ENCODE measurements at regions of chr6 and their contacts with region 1.

Region 1: GRCh38 chr6:135183532-135184440 is 2.7 kb downstream of the MYB start:
- DNase-seq: peak; percentile 92
- H3K4me3 Mint-ChIP-seq: peak overlapping the region; percentile 89
- H3K27ac Mint-ChIP-seq: peak overlapping the region; percentile 89
- H3K4me1 Mint-ChIP-seq: peaks cover 15% of the 10 kb centered on the region
- H3K27me3 Mint-ChIP-seq: no peaks in the 10 kb centered on the region

Region 2: DNA sequence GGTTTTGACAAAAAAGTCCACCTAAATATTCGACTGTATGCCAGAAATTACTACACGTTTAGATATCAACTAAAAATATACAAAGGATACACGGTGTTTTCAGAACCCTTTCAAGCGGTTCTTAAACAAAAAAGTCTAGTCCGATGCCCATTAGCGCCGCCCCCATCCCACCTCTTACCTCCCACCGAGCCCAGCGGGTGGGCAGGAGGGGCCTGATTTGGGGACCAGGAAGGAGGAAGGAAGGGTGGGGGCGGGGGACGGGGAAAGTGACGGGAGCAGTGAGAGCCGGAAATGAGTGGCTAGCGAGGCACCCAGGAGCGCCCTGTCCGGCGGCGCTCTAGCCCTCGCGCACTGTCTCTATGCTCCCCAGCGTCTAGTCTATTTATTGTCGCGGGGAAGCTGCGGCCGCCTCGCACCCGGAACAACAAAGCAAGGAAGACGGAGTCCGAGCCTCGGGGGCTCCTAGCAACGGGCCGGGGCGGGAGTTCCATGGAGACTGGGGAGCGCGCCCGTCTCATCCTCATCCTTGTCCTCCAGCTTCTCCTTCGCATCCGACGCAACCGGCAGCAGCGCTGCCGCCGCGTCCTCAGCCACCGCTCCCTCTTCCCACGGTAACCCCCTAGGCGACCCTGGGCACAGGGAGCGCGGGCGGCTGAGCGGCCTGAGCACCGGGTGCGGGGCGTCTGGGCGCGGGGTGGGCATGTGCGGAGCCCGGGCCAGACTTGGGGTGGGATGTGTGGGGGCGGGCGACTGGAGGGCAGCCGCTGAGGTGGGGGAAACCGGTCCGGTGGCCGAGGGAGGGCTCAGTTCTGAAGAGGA is 1230.8 kb before region 1 on chr6 and contains the start of gene TBPL1:
- CTCF ChIA-PET with region 1: no interaction called
- intact Hi-C with region 1: loop called (anchors 10 kb)
- DNase-seq: peak; percentile 92
- H3K4me3 Mint-ChIP-seq: peak within 1 kb of the TSS; percentile 87
- H3K27ac Mint-ChIP-seq: peak within 1 kb of the TSS; percentile 86
- H3K4me1 Mint-ChIP-seq: peaks cover 36% of the 10 kb centered on the region
- H3K27me3 Mint-ChIP-seq: no peaks in the 10 kb centered on the region
- total RNA-seq, gene TBPL1: 27.0 to 27.6 TPM

Region 3: DNA sequence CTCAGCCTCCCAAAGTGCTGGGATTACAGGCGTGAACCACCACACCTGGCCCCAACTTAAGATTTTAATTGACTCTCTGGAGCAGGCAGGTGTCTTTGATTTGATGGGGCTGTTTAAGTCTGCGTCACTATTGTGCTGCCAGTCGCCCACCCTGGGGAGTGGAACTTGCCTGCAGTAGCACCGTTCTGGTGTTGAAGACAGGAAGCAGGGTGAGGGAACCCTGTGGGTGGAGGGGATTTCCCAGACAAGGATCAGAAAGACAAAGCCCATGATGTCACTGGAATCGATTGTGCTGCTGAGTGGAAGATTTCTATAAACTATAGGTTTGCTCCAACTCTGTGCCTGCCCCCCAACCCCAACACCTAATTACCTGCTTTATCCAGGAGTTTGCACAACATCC is 244.9 kb before region 1 on chr6:
- CTCF ChIA-PET with region 1: interaction called, 7 read pairs
- intact Hi-C with region 1: loop called (anchors 5 kb)
- DNase-seq: peak; percentile 85
- H3K4me3 Mint-ChIP-seq: no peak overlapping the region
- H3K27ac Mint-ChIP-seq: no peak overlapping the region
- H3K4me1 Mint-ChIP-seq: peaks cover 21% of the 10 kb centered on the region
- H3K27me3 Mint-ChIP-seq: no peaks in the 10 kb centered on the region

Region 4: GRCh38 chr6:135088818-135089809 is 94.7 kb before region 1 on chr6:
- CTCF ChIA-PET with region 1: interaction called, 15 read pairs
- intact Hi-C with region 1: loop called (anchors 1 kb)
- DNase-seq: peak; percentile 61
- H3K4me3 Mint-ChIP-seq: peak overlapping the region; percentile 23
- H3K27ac Mint-ChIP-seq: peak overlapping the region; percentile 78
- H3K4me1 Mint-ChIP-seq: peaks cover 86% of the 10 kb centered on the region
- H3K27me3 Mint-ChIP-seq: no peaks in the 10 kb centered on the region

Region 5: GRCh38 chr6:135162678-135163439 is 20.9 kb before region 1 on chr6:
- CTCF ChIA-PET with region 1: interaction called, 8 read pairs
- intact Hi-C with region 1: loop called (anchors 1 kb)
- DNase-seq: peak; percentile 56
- H3K4me3 Mint-ChIP-seq: no peak overlapping the region
- H3K27ac Mint-ChIP-seq: peak overlapping the region; percentile 77
- H3K4me1 Mint-ChIP-seq: peaks cover 58% of the 10 kb centered on the region
- H3K27me3 Mint-ChIP-seq: no peaks in the 10 kb centered on the region

Region 6: DNA sequence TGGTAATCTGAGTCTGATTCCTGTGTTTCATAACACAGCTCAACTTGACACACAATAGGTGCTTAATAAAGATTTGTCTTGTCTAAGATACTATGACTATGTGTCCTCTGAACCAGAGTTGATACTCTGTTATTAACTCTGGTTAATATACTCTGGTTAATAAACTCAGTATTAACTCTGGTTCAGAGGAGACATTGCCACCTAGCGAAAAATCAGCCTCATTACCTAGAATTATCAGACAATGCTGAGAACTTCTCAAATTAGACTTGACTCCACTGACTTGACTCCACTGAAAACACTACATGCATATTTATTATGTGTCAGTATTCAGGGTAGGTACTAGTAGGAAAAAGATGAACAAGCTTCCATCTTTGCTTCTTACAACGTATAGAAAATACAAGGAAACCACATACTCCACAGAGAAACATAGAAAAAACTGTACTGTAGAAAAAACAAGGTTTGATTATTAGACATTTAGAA is 239.9 kb after region 1 on chr6:
- CTCF ChIA-PET with region 1: no interaction called
- intact Hi-C with region 1: loop called (anchors 1 kb)
- DNase-seq: no peak
- H3K4me3 Mint-ChIP-seq: no peak overlapping the region
- H3K27ac Mint-ChIP-seq: no peak overlapping the region
- H3K4me1 Mint-ChIP-seq: no peaks in the 10 kb centered on the region
- H3K27me3 Mint-ChIP-seq: no peaks in the 10 kb centered on the region